Naive thymus-derived CD8-positive, alpha-beta T cell (primary cell): ENCODE measurements at regions of chr22 and their contacts with region 1.

Region 1: DNA sequence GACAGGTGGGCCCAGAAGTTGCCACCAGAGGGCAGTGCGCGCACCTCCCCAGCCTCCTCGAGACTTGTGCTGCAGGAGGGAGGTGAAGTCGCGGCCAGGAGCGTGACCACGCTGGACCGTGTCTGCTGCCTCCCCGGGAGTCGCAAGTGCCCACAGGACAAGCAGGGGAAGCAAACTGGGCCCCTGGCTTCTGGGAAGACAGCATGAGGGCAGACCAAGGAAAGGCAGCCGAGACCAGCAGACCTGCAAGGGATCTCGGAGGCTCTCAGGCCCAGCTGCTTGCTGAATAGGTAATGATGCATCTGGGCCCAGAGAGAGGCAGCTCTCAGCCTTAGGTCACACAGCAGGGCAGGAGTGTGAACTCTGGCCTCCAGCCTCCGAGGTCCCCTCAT is 17.0 kb upstream of the IL2RB start:
- DNase-seq: peak; percentile 69 to 88 (median 79)
- ATAC-seq: peak; percentile 72 to 79
- H3K4me3 Mint-ChIP-seq: peak overlapping the region; percentile 69 to 96 (median 89)
- H3K27ac Mint-ChIP-seq: peak overlapping the region; percentile 84 to 99 (median 94)
- H3K4me1 Mint-ChIP-seq: peaks cover 46 to 98% (median 92%) of the 10 kb centered on the region in 4 donors
- H3K27me3 Mint-ChIP-seq: no peaks in the 10 kb centered on the region

Region 2: DNA sequence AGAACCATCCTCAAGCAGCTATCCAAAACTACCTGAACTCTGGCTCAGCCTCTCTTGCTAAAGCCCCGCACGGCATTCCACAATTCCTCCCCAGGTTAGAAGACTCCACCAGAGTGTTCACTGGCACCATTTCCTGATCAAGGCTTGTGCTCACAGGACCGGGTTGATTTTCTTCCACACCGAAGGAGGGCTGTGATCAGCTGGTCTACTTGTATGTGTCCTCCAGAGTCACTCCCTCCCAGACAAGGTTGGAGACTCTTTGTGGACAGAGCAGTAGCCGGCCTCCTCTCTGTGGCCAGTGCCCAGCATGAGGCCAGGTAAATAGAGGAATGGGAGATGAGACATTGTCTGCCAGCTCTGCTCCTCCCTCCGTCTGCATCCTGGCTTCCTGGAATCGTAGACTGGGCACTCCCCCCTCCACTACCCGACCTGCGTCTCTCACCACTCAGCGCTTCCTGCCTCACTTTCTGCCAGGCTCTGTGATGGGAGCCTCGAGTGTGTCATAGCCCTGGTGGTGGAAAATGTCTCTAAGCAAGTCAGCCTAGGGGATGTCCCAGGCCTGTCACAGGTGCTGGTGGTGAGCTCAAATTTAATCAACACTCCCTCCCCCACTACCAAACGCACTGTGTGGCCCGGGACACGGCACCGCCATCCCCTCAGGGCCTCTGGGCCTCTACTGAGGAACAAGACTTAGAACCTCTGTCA is 44.6 kb before region 1 on chr22:
- POLR2A ChIA-PET with region 1: interaction called, 20 read pairs
- DNase-seq: peak; percentile 73 to 96 (median 93)
- ATAC-seq: peak; percentile 98
- H3K4me3 Mint-ChIP-seq: peak overlapping the region; percentile 60 to 91 (median 84)
- H3K27ac Mint-ChIP-seq: peak overlapping the region; percentile 97 to 100 (median 98)
- H3K4me1 Mint-ChIP-seq: peaks cover 18 to 66% (median 59%) of the 10 kb centered on the region in 4 donors
- H3K27me3 Mint-ChIP-seq: no peaks in the 10 kb centered on the region

Region 3: DNA sequence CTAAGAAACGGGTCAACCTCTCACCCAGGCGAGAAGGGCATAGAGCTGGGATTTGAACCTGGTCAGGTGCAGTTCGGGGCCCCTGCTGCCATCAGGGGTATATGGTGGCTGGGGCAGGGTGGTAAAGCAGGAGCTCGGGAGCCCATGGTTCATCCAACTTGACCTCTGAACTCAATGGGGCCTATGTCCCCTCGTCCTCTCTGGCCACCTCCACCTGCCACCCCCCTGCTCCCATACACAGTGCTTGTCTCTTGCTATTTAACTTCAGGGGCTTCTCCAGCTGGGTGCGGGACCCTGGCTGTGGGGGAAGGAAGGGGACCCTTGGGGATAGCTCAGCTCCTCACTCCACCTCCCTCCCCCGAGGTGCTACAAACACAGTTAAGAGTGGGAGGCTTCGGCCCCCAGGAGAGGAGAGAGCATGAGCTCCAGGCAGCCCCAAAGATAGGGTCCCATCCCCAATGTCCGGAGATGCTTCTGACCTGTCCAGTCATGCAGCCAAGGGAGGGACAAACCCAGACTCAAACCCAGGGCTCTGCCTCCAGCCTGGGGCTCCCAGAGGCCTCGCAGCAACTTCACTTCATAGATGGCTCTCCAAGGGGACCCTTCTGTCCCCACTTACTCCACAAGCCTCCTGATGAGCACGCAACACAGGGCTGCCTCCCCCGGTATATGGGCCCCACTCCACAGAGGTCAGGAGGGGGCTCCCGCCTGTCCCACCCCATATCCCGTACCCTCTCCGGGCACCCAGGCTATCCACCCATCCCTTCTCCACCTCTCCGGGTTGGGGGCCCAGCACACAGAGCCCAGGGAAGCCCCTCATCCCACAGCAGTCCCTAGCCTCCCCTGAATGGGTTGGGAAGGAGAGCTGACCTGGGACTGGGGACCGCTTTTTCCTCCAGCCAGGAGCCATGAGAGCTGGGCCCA is 17.7 kb before region 1 on chr22:
- POLR2A ChIA-PET with region 1: interaction called, 50 read pairs
- DNase-seq: peak in 1 of 10 donors; percentile 51
- ATAC-seq: peak in 1 of 2 donors; percentile 17
- H3K4me3 Mint-ChIP-seq: peak overlapping the region; percentile 89 to 94 (median 90)
- H3K27ac Mint-ChIP-seq: peak overlapping the region; percentile 96 to 99 (median 98)
- H3K4me1 Mint-ChIP-seq: peaks cover 40 to 78% (median 65%) of the 10 kb centered on the region in 4 donors
- H3K27me3 Mint-ChIP-seq: no peaks in the 10 kb centered on the region

Region 4: DNA sequence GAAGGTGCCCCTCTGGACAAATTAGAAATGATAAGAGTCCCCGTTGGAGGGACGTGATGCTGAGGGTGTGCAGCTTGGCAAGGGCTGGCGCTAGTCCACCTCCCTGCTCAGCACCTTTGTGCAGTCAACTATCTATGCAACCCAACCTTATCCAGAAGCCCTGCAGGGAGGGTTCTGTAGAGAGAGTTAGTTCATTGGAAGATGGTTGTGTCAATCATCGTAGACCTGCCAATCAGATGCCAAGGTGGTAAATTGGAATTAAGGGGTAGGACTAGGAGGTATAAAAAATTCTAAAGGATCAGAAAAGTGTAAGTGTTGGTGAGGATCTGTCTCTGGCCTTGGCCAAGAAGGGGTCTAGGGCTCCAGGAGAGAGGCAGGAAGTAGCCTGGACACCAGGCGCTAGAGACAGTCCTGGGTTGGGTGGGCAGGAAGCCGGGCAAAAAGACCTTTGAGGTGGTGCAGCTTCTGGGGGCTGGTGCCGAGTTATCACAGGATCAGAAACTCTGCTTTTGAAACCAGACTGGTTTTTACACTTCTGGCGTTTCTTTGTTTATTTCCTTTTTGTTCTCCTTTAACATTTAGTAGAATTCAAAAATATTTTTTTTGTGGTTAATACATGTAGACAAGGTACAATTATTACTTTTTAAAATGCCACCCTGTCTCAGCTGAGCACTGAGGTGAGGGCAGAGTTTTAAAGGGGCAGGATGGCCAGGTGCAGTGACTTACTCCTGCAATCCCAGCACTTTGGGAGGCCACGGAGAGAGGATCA is 19.7 kb after region 1 on chr22:
- POLR2A ChIA-PET with region 1: interaction called, 18 read pairs
- DNase-seq: peak in 8 of 10 donors; percentile 50 to 87 (median 76)
- ATAC-seq: peak; percentile 85 to 91
- H3K4me3 Mint-ChIP-seq: peak overlapping the region; percentile 44 to 85 (median 78)
- H3K27ac Mint-ChIP-seq: peak overlapping the region; percentile 32 to 97 (median 90)
- H3K4me1 Mint-ChIP-seq: peaks cover 28 to 67% (median 60%) of the 10 kb centered on the region in 4 donors
- H3K27me3 Mint-ChIP-seq: no peaks in the 10 kb centered on the region

Region 5: GRCh38 chr22:37199103-37199759 is 32.6 kb after region 1 on chr22:
- POLR2A ChIA-PET with region 1: interaction called, 65 read pairs
- DNase-seq: peak; percentile 95 to 100 (median 99)
- ATAC-seq: peak; percentile 91 to 94
- H3K4me3 Mint-ChIP-seq: peak overlapping the region; percentile 82 to 93 (median 88)
- H3K27ac Mint-ChIP-seq: peak overlapping the region; percentile 85 to 100 (median 96)
- H3K4me1 Mint-ChIP-seq: peaks cover 15 to 82% (median 76%) of the 10 kb centered on the region in 4 donors
- H3K27me3 Mint-ChIP-seq: no peaks in the 10 kb centered on the region

Region 6: DNA sequence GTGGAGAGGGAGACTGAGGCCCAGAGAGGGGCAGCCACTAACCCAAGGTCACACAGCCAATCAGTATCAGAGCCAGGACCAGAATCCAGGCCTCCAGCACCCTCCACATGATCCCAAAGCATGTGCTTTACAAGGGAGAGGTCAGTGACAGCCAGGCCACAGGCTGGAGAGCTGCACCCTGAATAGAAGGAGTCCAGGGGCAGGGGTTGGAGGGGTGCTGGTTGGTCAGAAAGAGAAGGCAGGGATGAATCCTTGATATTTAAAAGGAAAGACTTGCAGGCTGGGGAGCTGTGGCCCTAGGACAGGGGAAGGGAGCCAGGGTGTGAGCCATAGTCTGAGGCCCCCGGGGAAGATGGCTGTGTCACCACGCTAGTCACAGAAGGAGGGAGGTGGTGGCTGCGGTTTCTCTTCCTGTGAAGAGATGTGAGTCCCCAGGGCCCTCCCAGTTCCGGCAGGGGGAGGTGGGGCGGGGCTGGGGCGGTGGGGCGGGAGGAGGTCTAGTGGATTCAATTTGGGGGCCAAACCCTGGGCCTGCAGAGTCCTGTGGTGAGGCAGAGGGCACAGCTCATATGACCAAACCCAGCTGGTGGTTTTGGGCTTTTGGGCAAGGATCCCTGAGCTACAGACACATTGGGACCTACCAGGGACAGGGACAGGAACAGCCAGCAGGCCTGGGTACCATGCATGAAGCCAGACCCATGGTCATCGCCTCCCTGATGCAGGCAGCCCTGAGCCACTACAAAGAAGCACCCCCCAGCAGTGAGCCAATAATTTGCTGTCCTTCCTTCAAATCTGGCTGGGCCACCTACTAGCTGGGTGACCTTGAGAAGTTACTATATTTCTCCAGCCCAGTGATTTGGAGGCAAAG is 63.4 kb after region 1 on chr22:
- POLR2A ChIA-PET with region 1: interaction called, 30 read pairs
- DNase-seq: peak; percentile 77 to 96 (median 88)
- ATAC-seq: peak; percentile 69 to 84
- H3K4me3 Mint-ChIP-seq: peak overlapping the region; percentile 79 to 95 (median 88)
- H3K27ac Mint-ChIP-seq: peak overlapping the region; percentile 97 to 100 (median 98)
- H3K4me1 Mint-ChIP-seq: peaks cover 62 to 92% (median 90%) of the 10 kb centered on the region in 4 donors
- H3K27me3 Mint-ChIP-seq: no peaks in the 10 kb centered on the region

Region 7: GRCh38 chr22:37260901-37261336 is 94.2 kb after region 1 on chr22:
- POLR2A ChIA-PET with region 1: interaction called, 12 read pairs
- DNase-seq: peak in 9 of 10 donors; percentile 41 to 83 (median 61)
- ATAC-seq: peak; percentile 76 to 85
- H3K4me3 Mint-ChIP-seq: peak overlapping the region in 6 of 10 donors; percentile 9 to 53 (median 30)
- H3K27ac Mint-ChIP-seq: peak overlapping the region; percentile 10 to 90 (median 54)
- H3K4me1 Mint-ChIP-seq: peaks cover 16 to 26% (median 24%) of the 10 kb centered on the region in 4 donors
- H3K27me3 Mint-ChIP-seq: peaks cover 0 to 1% (median 0%) of the 10 kb centered on the region in 5 donors